Natural killer cell (primary cell): ENCODE measurements at regions of chr21 and their contacts with region 1.

Region 1: GRCh38 chr21:33324291-33325221 is at the start of gene IFNAR1:
- DNase-seq: peak; percentile 97 to 100
- ATAC-seq: peak; percentile 81 to 97 (median 91)
- H3K4me3 ChIP-seq: peak within 1 kb of the TSS; percentile 98
- H3K4me3 Mint-ChIP-seq: no peak within 1 kb of the TSS
- H3K27ac ChIP-seq: peak within 1 kb of the TSS; percentile 96
- H3K27ac Mint-ChIP-seq: no peak within 1 kb of the TSS
- H3K4me1 ChIP-seq: peaks cover 22% of the 10 kb centered on the region
- H3K4me1 Mint-ChIP-seq: peaks cover 12 to 17% of the 10 kb centered on the region in 2 donors
- H3K27me3 ChIP-seq: no peaks in the 10 kb centered on the region
- H3K27me3 Mint-ChIP-seq: peaks cover 3 to 8% of the 10 kb centered on the region in 2 donors
- CTCF ChIP-seq: no peak
- total RNA-seq, gene IFNAR1: 15.0 to 21.3 (median 19.3) TPM

Region 2: GRCh38 chr21:33205476-33205875 is 119.1 kb before region 1 on chr21:
- intact Hi-C with region 1: loop called (anchors 2 kb)
- DNase-seq: peak; percentile 40 to 67
- ATAC-seq: peak; percentile 46 to 82 (median 74)
- H3K4me3 ChIP-seq: no peak overlapping the region
- H3K4me3 Mint-ChIP-seq: peak overlapping the region; percentile 79
- H3K27ac ChIP-seq: peak overlapping the region; percentile 74
- H3K27ac Mint-ChIP-seq: peak overlapping the region; percentile 88 to 89
- H3K4me1 ChIP-seq: peaks cover 57% of the 10 kb centered on the region
- H3K4me1 Mint-ChIP-seq: peaks cover 58 to 63% of the 10 kb centered on the region in 2 donors
- H3K27me3 ChIP-seq: no peaks in the 10 kb centered on the region
- H3K27me3 Mint-ChIP-seq: no peaks in the 10 kb centered on the region
- CTCF ChIP-seq: no peak

Region 3: DNA sequence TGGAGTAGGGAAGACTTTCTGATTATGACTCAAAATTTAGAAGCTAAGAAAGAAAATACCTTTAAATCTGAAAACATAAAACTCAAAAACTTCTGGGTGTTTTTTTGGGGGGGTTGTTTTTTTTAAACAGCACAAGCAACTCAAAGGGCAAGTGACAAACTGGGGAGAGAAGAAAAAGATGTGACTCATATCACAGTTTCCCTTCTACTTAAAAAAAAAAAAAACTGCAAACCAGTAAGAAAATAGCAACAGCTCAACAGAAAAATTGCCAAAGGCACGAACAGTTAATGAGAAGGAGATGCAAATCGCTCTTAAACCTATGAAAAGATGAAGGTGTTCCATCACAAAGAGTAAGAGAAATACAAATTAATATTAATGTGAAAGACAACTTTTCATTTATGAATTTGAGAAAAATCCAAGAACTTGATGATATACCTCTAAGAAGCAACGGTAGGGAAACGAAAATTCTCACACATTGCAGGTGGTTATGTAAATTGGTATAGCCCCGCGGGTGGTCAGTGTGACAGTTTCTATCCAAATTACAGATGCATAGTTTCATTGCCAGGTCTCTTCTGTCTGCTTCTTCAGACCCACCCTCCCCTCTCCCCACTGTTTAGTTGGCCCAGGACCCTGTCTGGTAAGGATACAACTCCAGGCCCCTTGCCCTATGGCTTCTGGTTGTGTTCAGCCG is 85.8 kb before region 1 on chr21:
- intact Hi-C with region 1: loop called (anchors 5 kb)
- DNase-seq: peak in 1 of 2 donors; percentile 64
- ATAC-seq: peak; percentile 67 to 78 (median 71)
- H3K4me3 ChIP-seq: no peak overlapping the region
- H3K4me3 Mint-ChIP-seq: peak overlapping the region; percentile 85
- H3K27ac ChIP-seq: peak overlapping the region; percentile 84
- H3K27ac Mint-ChIP-seq: peak overlapping the region; percentile 91 to 97
- H3K4me1 ChIP-seq: peaks cover 76% of the 10 kb centered on the region
- H3K4me1 Mint-ChIP-seq: peaks cover 83 to 86% of the 10 kb centered on the region in 2 donors
- H3K27me3 ChIP-seq: no peaks in the 10 kb centered on the region
- H3K27me3 Mint-ChIP-seq: no peaks in the 10 kb centered on the region
- CTCF ChIP-seq: no peak

Region 4: GRCh38 chr21:33360881-33361602 is 36.5 kb after region 1 on chr21:
- intact Hi-C with region 1: loop called (anchors 5 kb)
- DNase-seq: peak; percentile 74 to 93
- ATAC-seq: peak; percentile 72 to 83 (median 75)
- H3K4me3 ChIP-seq: peak overlapping the region; percentile 26
- H3K4me3 Mint-ChIP-seq: peak overlapping the region; percentile 82
- H3K27ac ChIP-seq: no peak overlapping the region
- H3K27ac Mint-ChIP-seq: peak overlapping the region; percentile 67 to 81
- H3K4me1 ChIP-seq: peaks cover 15% of the 10 kb centered on the region
- H3K4me1 Mint-ChIP-seq: peaks cover 15 to 18% of the 10 kb centered on the region in 2 donors
- H3K27me3 ChIP-seq: no peaks in the 10 kb centered on the region
- H3K27me3 Mint-ChIP-seq: peaks cover 12 to 15% of the 10 kb centered on the region in 2 donors
- CTCF ChIP-seq: peak; percentile 92

Region 5: GRCh38 chr21:33374450-33375096 is 50.0 kb after region 1 on chr21:
- intact Hi-C with region 1: loop called (anchors 2 kb)
- DNase-seq: peak in 1 of 2 donors; percentile 78
- ATAC-seq: peak in 2 of 3 donors; percentile 71 to 78
- H3K4me3 ChIP-seq: no peak overlapping the region
- H3K4me3 Mint-ChIP-seq: no peak overlapping the region
- H3K27ac ChIP-seq: peak overlapping the region; percentile 16
- H3K27ac Mint-ChIP-seq: no peak overlapping the region
- H3K4me1 ChIP-seq: peaks cover 23% of the 10 kb centered on the region
- H3K4me1 Mint-ChIP-seq: peaks cover 7 to 8% of the 10 kb centered on the region in 2 donors
- H3K27me3 ChIP-seq: peaks cover 31% of the 10 kb centered on the region
- H3K27me3 Mint-ChIP-seq: peaks cover 56 to 67% of the 10 kb centered on the region in 2 donors
- CTCF ChIP-seq: peak; percentile 52

Region 6: DNA sequence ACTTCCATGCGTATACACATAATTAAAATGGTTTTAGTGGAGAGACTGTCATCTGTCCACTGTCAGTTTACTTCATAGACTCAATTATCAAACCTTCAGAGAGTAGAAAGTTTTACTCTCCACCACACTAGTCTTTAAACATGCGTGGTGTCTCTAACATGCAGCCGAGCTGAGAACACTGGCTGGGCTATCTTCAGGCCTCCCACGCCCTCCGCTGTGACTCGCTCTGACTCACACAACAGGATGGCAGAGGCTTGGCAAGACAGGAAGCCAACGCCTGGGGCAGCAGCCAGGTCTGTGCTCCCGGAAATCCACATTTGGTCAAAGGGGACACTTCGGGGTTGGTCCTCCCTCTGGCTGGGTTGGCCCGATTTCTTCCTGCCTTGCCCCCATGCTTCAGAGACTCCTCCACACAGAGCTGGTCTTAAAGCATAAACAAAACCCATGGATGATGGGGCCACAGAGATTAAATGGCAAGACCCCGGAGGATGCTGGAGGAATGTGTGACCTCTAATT is 56.0 kb after region 1 on chr21:
- intact Hi-C with region 1: loop called (anchors 2 kb)
- DNase-seq: peak; percentile 61 to 84
- ATAC-seq: peak; percentile 60 to 79 (median 62)
- H3K4me3 ChIP-seq: no peak overlapping the region
- H3K4me3 Mint-ChIP-seq: peak overlapping the region; percentile 47
- H3K27ac ChIP-seq: peak overlapping the region; percentile 61
- H3K27ac Mint-ChIP-seq: peak overlapping the region; percentile 41 to 72
- H3K4me1 ChIP-seq: peaks cover 63% of the 10 kb centered on the region
- H3K4me1 Mint-ChIP-seq: peaks cover 50 to 53% of the 10 kb centered on the region in 2 donors
- H3K27me3 ChIP-seq: peaks cover 42% of the 10 kb centered on the region
- H3K27me3 Mint-ChIP-seq: peaks cover 46 to 49% of the 10 kb centered on the region in 2 donors
- CTCF ChIP-seq: no peak